ENCODE measurements at regions of chr3 and their contacts with region 1.

Region 1: GRCh38 chr3:127455541-127456450 is 134.7 kb downstream of the TPRA1 start:
- DNase-seq: peak; percentile 81
- ATAC-seq: peak; percentile 87

Region 2: DNA sequence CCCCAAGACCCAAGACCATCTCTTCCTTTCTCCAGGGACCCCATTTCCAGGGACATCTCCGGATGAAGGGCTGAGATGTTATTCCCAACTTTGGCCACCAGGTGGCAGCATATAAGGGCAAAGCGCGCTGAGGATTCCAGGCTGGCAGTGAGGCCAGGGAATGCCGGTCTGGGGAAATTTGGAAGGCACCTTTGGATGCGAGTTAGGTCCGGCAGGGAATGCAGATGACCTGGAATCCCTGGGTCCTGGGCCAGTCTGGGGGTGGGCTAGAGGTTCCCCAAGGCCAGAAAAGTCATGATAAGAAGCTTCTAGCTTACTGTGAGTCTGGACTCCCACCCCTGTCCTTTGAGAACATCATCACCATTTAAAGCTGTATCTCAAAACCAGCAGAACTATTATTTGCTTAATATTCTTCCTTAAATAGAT is 933.4 kb before region 1 on chr3:
- intact Hi-C with region 1: loop called (anchors 5 kb)
- DNase-seq: peak; percentile 77
- ATAC-seq: peak; percentile 56

Region 3: DNA sequence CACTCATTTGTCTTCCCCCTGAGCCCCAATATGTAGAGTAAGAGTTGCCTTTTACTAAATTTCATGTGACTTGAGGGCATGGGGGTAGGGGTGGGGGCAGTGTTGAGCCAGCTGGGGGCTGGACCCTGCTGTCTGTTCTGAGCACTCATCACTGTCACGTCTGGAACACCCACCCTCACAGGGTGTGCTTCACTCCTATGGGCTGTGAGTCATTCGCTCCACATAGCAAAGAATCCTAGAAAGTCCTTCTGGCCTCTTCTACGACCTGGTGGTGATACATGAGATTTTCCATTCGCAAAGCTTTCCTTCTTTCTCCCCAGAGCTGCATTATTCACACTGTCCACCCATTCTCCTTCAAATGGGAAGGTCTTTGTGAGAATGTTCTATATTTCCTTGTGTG is 410.1 kb after region 1 on chr3:
- intact Hi-C with region 1: no loop called
- DNase-seq: no peak
- ATAC-seq: no peak

Measured in sciatic nerve (tissue), 2 donors.